ENCODE measurements at regions of chr15 and their contacts with region 1.

Region 1: DNA sequence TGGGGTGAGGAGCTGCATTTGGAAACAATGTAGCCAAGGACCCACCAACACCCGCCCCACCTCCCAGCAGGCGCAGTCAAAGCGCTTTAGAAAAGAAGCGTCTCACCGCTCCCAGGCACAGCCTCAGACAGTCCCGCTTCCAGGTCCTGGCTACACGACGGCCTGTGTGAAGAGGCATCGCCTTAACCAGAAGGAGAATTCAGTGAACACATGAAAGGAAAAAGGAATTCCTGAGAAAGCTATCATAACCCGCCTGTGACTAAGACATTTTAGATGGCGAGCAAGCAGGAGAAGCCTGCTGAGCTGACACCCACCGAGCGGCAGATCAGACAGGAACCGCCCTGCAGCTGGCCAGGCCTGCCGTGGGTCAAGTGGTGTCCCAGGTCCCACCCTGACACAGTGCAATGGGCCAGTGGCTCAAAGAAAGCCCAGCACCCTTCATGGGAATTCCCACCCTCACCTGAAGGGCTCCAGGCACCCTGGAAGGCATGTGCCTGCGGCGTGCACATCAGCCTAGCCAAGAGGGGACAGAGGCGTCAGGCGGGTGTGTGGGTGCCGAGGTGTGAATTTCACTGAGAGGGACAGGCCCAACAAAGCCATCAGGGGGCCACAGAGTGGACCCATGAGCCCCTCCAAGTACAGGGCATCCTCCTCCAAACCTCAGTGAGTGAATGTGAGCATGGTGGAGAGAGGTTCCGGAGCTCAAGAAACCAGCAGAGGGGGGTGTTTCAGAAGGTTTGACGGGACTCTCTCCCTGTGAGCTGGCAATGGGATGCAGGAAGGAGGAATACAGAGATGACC is 144.8 kb downstream of the NSMCE3 start:
- DNase-seq: no peak
- ATAC-seq: no peak
- H3K4me3 Mint-ChIP-seq: no peak overlapping the region
- H3K27ac Mint-ChIP-seq: no peak overlapping the region
- H3K4me1 Mint-ChIP-seq: no peaks in the 10 kb centered on the region
- H3K27me3 Mint-ChIP-seq: no peaks in the 10 kb centered on the region

Region 2: GRCh38 chr15:29183071-29183831 is 58.5 kb after region 1 on chr15:
- CTCF ChIA-PET with region 1: no interaction called
- POLR2A ChIA-PET with region 1: no interaction called
- intact Hi-C with region 1: loop called in 1 of 2 experiments (anchors 10 kb)
- DNase-seq: no peak
- ATAC-seq: peak; percentile 81
- H3K4me3 Mint-ChIP-seq: no peak overlapping the region
- H3K27ac Mint-ChIP-seq: no peak overlapping the region
- H3K4me1 Mint-ChIP-seq: peaks cover 13% of the 10 kb centered on the region
- H3K27me3 Mint-ChIP-seq: peaks cover 24% of the 10 kb centered on the region

Measured in activated CD4-positive, alpha-beta T cell treated with anti-CD3 and anti-CD28 coated beads for 36 hours (primary cell).